Dorsolateral prefrontal cortex (tissue), 120 donors: ENCODE measurements at regions of chr1 and their contacts with region 1.

Region 1: GRCh38 chr1:200669314-200670241 is at the start of gene DDX59:
- DNase-seq: peak; percentile 82 to 97 (median 92)
- H3K4me3 ChIP-seq: peak within 1 kb of the TSS; percentile 58 to 97 (median 85)
- H3K27ac ChIP-seq: peak within 1 kb of the TSS; percentile 39 to 100 (median 99)
- H3K27me3 ChIP-seq: no peaks in the 10 kb centered on the region
- CTCF ChIP-seq: peak in 14 of 56 donors; percentile 8 to 41 (median 17)
- total RNA-seq, gene DDX59: 9.3 to 24.9 (median 15.1) TPM

Region 2: DNA sequence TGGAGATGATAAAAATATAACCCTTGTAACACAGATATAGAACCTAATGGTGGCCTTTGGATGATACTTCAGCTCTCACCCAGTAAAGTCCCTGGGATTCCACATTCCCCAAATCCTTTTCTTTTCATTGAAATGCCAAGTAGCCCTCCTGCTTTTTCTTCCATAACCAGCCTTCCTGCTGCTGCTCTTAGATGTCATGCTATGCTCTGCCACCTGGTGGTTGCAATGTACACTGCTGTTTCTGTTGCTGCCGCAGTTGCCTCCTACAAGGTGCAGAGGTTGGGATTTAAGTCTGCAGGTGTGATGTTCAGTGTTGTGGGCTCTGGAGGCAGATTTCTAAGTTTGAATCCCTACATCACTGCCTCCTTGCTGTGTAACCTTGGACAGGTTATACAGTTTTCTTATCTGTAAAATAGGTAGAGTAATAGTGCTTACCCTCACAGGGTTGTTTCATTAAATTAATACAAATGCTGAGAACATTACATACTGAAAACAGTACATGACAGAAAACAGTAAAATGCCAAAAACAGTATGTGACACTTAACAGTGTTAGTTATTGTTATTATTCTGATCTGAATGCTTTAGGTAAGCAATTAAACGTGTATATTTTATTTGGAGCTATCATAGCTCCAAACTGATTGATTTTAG is 133.4 kb after region 1 on chr1:
- intact Hi-C with region 1: loop called (anchors 5 kb)
- DNase-seq: peak; percentile 55 to 88 (median 80)
- H3K4me3 ChIP-seq: peak overlapping the region in 3 of 59 donors; percentile 0 to 25 (median 11)
- H3K27ac ChIP-seq: peak overlapping the region in 1 of 59 donors; percentile 25
- H3K27me3 ChIP-seq: no peaks in the 10 kb centered on the region
- CTCF ChIP-seq: peak; percentile 89 to 99 (median 97)